BJ (cell line): ENCODE measurements at regions of chr17 and their contacts with region 1.

Region 1: GRCh38 chr17:46841561-46842379 is 9.6 kb upstream of the WNT9B start:
- DNase-seq: no peak
- H3K4me3 ChIP-seq: peak overlapping the region; percentile 22; the same call in 1 of the 2 replicates
- H3K27me3 ChIP-seq: peaks cover 8% of the 10 kb centered on the region
- CTCF ChIP-seq: peak; percentile 48

Region 2: DNA sequence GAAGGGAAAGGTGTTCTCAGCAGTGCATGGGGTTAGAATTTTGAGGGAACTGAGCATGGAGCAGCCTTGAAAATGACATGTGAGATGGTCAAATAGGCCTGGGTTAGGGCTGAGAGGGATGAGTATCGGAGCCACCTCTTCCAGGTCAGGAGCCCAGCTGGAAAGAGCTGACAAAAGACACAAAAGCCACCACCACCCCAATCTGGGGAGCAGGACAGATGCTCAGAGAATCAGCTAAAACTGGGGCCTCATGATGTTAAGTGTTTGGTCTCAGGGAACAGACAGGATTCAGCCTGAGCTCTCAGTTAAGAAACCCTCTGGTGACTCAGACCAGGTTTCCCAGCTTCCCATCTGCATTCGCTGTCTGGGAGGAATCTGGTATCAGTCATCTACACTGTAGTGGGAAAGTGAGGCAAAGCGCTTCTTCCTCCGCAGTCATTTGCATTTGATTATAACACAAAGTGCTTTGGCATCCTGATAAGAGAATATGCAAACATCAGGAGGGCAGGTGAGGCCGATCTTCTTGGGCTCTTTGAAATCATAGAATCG is 12.2 kb after region 1 on chr17:
- CTCF ChIA-PET with region 1: interaction called, 20 read pairs
- POLR2A ChIA-PET with region 1: no interaction called
- DNase-seq: no peak
- H3K4me3 ChIP-seq: no peak overlapping the region
- H3K27me3 ChIP-seq: peaks cover 36% of the 10 kb centered on the region
- CTCF ChIP-seq: no peak

Region 3: GRCh38 chr17:46859996-46860395 is 18.2 kb after region 1 on chr17:
- CTCF ChIA-PET with region 1: interaction called, 20 read pairs
- POLR2A ChIA-PET with region 1: no interaction called
- DNase-seq: no peak
- H3K4me3 ChIP-seq: no peak overlapping the region
- H3K27me3 ChIP-seq: peaks cover 2% of the 10 kb centered on the region
- CTCF ChIP-seq: no peak

Region 4: DNA sequence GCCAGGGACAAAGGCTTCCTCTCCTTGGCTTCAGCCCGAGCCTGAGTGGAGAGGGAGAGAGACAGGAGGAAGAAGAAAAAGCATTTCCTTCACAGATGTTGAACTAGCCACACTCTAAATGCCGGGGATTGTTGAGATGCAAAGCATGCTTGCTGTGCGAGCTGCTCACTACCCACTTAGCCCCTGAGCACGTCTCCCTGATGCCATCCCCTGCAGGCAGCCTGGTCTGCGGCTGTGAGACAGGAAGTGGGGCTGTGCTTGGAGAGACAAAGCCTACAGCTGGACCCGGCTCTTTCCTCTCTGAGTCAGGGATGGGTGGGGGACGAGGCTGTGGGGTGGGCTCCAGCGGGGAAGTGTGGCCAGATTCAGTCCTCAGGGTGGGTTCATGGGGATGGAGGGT is 23.3 kb after region 1 on chr17:
- CTCF ChIA-PET with region 1: interaction called, 16 read pairs
- POLR2A ChIA-PET with region 1: no interaction called
- DNase-seq: peak; percentile 58
- H3K4me3 ChIP-seq: no peak overlapping the region
- H3K27me3 ChIP-seq: peaks cover 6% of the 10 kb centered on the region
- CTCF ChIP-seq: 0 out of 2 replicates have a peak, but pooled peaks have one; percentile 6

Region 5: DNA sequence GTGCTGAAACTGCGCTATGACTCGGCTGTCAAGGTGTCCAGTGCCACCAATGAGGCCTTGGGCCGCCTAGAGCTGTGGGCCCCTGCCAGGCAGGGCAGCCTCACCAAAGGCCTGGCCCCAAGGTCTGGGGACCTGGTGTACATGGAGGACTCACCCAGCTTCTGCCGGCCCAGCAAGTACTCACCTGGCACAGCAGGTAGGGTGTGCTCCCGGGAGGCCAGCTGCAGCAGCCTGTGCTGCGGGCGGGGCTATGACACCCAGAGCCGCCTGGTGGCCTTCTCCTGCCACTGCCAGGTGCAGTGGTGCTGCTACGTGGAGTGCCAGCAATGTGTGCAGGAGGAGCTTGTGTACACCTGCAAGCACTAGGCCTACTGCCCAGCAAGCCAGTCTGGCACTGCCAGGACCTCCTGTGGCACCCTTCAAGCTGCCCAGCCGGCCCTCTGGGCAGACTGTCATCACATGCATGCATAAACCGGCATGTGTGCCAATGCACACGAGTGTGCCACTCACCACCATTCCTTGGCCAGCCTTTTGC is 34.6 kb after region 1 on chr17:
- CTCF ChIA-PET with region 1: interaction called, 17 read pairs
- POLR2A ChIA-PET with region 1: no interaction called
- DNase-seq: no peak
- H3K4me3 ChIP-seq: no peak overlapping the region
- H3K27me3 ChIP-seq: peaks cover 8% of the 10 kb centered on the region
- CTCF ChIP-seq: peak; percentile 41; the same call in 1 of the 2 replicates

Region 6: GRCh38 chr17:46995841-46996571 is 154.2 kb after region 1 on chr17:
- CTCF ChIA-PET with region 1: interaction called, 26 read pairs
- POLR2A ChIA-PET with region 1: no interaction called
- DNase-seq: no peak
- H3K4me3 ChIP-seq: no peak overlapping the region
- H3K27me3 ChIP-seq: 0 out of 2 replicates have a peak, but pooled peaks cover 2% of the 10 kb centered on the region
- CTCF ChIP-seq: no peak